WTC11 (cell line): ENCODE measurements at regions of chr6 and their contacts with region 1.

Region 1: DNA sequence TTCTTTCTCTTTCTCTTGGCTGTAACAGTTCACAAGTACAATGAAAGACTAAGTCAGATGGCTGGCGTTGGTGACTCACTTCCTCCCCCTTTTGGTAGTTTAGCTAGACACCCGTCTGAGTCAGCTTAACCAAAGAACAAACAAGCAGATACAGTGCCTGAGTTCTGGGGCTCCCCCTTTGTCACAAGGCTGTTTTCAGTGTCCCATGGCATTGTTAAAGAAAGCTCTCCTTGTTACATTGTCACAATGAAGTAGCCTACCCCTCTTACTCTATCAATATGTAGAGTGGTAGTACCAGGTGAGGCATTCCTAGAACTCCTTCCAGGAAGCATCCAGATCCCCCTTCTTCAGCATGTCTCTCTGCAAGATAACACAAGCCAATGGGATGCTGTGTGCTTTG is 38.6 kb downstream of the KIAA0408 start:
- DNase-seq: peak; percentile 54
- ATAC-seq: peak; percentile 99
- H3K4me3 Mint-ChIP-seq: no peak overlapping the region
- H3K27ac Mint-ChIP-seq: peak overlapping the region; percentile 75; the same call in 1 of the 2 replicates
- H3K4me1 Mint-ChIP-seq: peaks cover 10% of the 10 kb centered on the region
- H3K27me3 Mint-ChIP-seq: no peaks in the 10 kb centered on the region
- CTCF ChIP-seq: peak; percentile 21; the same call in 1 of the 2 replicates

Region 2: GRCh38 chr6:127300411-127300810 is 120.1 kb before region 1 on chr6:
- CTCF ChIA-PET with region 1: interaction called, 10 read pairs
- POLR2A ChIA-PET with region 1: no interaction called
- DNase-seq: no peak
- ATAC-seq: peak; percentile 69
- H3K4me3 Mint-ChIP-seq: no peak overlapping the region
- H3K27ac Mint-ChIP-seq: peak overlapping the region; percentile 29; the same call in 1 of the 2 replicates
- H3K4me1 Mint-ChIP-seq: peaks cover 15% of the 10 kb centered on the region
- H3K27me3 Mint-ChIP-seq: no peaks in the 10 kb centered on the region
- CTCF ChIP-seq: no peak

Region 3: DNA sequence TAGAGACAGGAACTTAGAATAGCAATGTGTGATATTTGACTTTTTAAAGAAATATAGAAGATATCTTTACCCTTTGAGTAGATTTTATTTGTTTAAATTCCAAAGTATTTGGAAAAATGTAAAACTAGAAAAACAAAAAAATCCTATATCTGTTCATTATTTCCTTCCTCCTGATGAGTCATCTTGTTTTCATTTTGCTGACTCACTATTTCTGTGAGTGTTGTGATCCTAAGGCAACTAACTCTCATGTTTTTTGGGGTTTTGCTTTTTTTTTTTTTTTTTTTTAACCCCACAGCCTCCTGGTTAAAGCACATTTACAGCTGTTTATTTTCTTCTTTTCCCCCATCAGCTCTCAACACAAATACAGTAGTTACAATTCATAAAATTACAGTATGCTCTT is 518.1 kb after region 1 on chr6:
- CTCF ChIA-PET with region 1: no interaction called
- POLR2A ChIA-PET with region 1: no interaction called
- DNase-seq: no peak
- ATAC-seq: no peak
- H3K4me3 Mint-ChIP-seq: no peak overlapping the region
- H3K27ac Mint-ChIP-seq: no peak overlapping the region
- H3K4me1 Mint-ChIP-seq: no peaks in the 10 kb centered on the region
- H3K27me3 Mint-ChIP-seq: no peaks in the 10 kb centered on the region
- CTCF ChIP-seq: no peak